ENCODE measurements at regions of chr1 and their contacts with region 1.

Region 1: GRCh38 chr1:27284425-27285273 is 37.3 kb upstream of the TMEM222 start:
- DNase-seq: peak; percentile 64
- ATAC-seq: peak; percentile 96
- H3K4me3 Mint-ChIP-seq: no peak overlapping the region
- H3K27ac Mint-ChIP-seq: peak overlapping the region; percentile 13
- H3K4me1 Mint-ChIP-seq: peaks cover 12% of the 10 kb centered on the region
- H3K27me3 Mint-ChIP-seq: no peaks in the 10 kb centered on the region
- CTCF ChIP-seq: no peak

Region 2: DNA sequence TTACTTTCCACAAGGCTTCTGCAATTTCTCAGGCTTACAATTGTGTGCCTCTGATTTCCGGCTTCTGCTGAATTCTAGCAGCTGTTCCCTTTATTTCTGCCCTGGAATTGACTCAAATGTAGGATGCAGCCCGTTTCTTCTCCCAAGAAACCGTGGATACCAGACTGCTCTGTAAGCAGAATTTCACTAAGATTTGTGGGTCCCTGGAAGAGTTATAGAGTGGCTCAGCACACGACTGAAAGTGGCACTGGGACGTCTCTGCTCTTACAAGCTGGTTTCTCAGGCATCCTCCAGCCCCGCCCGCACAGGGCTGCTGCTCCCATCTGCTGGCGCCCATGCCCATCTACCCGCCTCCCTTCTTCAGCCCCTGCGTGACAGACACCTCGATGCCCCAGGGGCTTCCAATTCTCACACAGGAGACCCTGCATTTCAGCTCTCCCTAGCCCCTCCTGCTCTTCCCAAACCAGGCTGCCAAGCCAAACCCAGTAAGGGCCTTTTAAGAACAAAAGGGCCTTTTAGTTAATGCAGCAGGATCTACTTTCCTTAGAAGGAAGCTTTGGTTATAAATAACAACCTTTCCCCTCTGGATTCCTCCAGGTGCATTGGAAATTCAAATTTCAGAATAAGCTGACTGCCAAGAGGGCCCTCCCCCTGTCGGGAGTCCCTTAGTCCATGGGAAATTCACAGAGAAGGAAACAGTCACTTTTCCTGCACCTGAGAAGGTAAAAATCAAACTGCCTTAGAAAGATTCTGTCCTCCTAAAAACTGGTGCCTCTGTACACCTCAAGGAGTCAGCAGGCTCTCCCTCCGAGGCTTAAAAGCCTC is 226.6 kb before region 1 on chr1:
- CTCF ChIA-PET with region 1: no interaction called
- POLR2A ChIA-PET with region 1: no interaction called
- intact Hi-C with region 1: no loop called
- DNase-seq: no peak
- ATAC-seq: no peak
- H3K4me3 Mint-ChIP-seq: no peak overlapping the region
- H3K27ac Mint-ChIP-seq: no peak overlapping the region
- H3K4me1 Mint-ChIP-seq: no peaks in the 10 kb centered on the region
- H3K27me3 Mint-ChIP-seq: no peaks in the 10 kb centered on the region
- CTCF ChIP-seq: no peak

Region 3: GRCh38 chr1:27111626-27112573 is 172.7 kb before region 1 on chr1:
- CTCF ChIA-PET with region 1: interaction called, 32 read pairs
- POLR2A ChIA-PET with region 1: no interaction called
- intact Hi-C with region 1: loop called (anchors 2 kb)
- DNase-seq: no peak
- ATAC-seq: peak; percentile 97
- H3K4me3 Mint-ChIP-seq: peak overlapping the region; percentile 48
- H3K27ac Mint-ChIP-seq: peak overlapping the region; percentile 80
- H3K4me1 Mint-ChIP-seq: peaks cover 24% of the 10 kb centered on the region
- H3K27me3 Mint-ChIP-seq: no peaks in the 10 kb centered on the region
- CTCF ChIP-seq: no peak

Region 4: GRCh38 chr1:27192039-27192529 is 92.6 kb before region 1 on chr1:
- CTCF ChIA-PET with region 1: interaction called, 62 read pairs
- POLR2A ChIA-PET with region 1: no interaction called
- intact Hi-C with region 1: no loop called
- DNase-seq: no peak
- ATAC-seq: no peak
- H3K4me3 Mint-ChIP-seq: no peak overlapping the region
- H3K27ac Mint-ChIP-seq: no peak overlapping the region
- H3K4me1 Mint-ChIP-seq: no peaks in the 10 kb centered on the region
- H3K27me3 Mint-ChIP-seq: peaks cover 2% of the 10 kb centered on the region
- CTCF ChIP-seq: no peak

Region 5: DNA sequence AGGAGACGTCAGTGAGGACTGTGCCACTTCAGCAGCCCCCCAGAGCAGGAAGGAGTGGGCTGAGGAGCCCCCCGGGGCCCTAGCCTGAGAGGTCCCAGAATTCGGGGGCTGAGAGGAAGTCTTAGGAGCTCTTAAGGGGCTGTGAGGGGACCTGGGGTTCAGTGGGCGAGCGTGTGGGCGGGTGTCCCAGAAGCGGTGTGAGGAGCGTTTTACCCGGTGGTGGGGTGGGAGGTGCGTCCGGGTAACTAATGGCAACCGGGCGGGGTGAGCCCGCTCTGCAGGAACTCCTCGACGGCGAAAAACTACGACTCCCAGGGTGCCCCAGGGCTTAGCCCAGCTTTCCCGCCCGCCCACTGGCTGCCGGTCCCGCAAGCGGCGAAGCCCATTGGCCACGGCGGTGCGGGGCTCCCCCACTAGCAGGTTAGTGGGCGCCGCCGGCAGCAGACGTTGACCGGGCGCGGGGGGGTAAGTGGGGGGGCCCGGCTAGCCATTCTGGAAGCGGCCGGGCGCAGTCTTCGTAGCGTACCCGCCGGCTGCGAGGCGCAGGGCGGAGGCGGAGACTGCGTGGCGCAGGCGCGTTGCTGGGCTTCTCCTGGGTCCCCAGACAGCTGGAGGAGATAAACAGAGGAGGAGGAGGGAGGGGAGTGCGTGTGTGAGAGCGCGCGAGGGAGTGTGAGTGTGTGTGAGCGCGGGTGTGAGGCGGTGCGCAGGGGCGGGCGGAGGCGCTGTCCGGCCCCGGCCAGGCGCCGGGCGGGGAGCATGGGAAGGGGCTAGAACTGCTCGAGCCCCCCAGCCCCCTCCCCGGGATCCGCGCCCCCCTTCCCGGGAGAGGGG is 50.4 kb before region 1 on chr1 and contains the start of gene WDTC1:
- CTCF ChIA-PET with region 1: interaction called, 10 read pairs
- POLR2A ChIA-PET with region 1: interaction called, 5 read pairs
- intact Hi-C with region 1: loop called (anchors 1 kb)
- DNase-seq: peak; percentile 94
- ATAC-seq: peak; percentile 91
- H3K4me3 Mint-ChIP-seq: peak within 1 kb of the TSS; percentile 98
- H3K27ac Mint-ChIP-seq: peak within 1 kb of the TSS; percentile 90
- H3K4me1 Mint-ChIP-seq: peaks cover 30% of the 10 kb centered on the region
- H3K27me3 Mint-ChIP-seq: no peaks in the 10 kb centered on the region
- CTCF ChIP-seq: no peak
- total RNA-seq, gene WDTC1: 62.8 and 65.1 TPM in 2 replicates

Region 6: GRCh38 chr1:27445177-27445936 is 160.7 kb after region 1 on chr1:
- CTCF ChIA-PET with region 1: no interaction called
- POLR2A ChIA-PET with region 1: no interaction called
- intact Hi-C with region 1: no loop called
- DNase-seq: no peak
- ATAC-seq: peak; percentile 47
- H3K4me3 Mint-ChIP-seq: peak overlapping the region; percentile 66
- H3K27ac Mint-ChIP-seq: peak overlapping the region; percentile 82
- H3K4me1 Mint-ChIP-seq: peaks cover 60% of the 10 kb centered on the region
- H3K27me3 Mint-ChIP-seq: no peaks in the 10 kb centered on the region
- CTCF ChIP-seq: no peak